Adrenal gland (tissue), 19 donors: ENCODE measurements at regions of chr6 and their contacts with region 1.

Region 1: GRCh38 chr6:7725849-7726415 is at the start of gene BMP6:
- DNase-seq: peak; percentile 88 to 92 (median 90)
- H3K4me3 ChIP-seq: peak within 1 kb of the TSS in 2 of 4 donors; percentile 34 to 80
- H3K27ac ChIP-seq: no peak within 1 kb of the TSS
- H3K4me1 ChIP-seq: peaks cover 17 to 33% of the 10 kb centered on the region in 2 donors
- H3K27me3 ChIP-seq: peaks cover 28% of the 10 kb centered on the region
- CTCF ChIP-seq: no peak
- POLR2A ChIP-seq: peak in 1 of 2 donors; percentile 52
- total RNA-seq, gene BMP6: 1.7 to 17.0 (median 4.7) TPM

Region 2: DNA sequence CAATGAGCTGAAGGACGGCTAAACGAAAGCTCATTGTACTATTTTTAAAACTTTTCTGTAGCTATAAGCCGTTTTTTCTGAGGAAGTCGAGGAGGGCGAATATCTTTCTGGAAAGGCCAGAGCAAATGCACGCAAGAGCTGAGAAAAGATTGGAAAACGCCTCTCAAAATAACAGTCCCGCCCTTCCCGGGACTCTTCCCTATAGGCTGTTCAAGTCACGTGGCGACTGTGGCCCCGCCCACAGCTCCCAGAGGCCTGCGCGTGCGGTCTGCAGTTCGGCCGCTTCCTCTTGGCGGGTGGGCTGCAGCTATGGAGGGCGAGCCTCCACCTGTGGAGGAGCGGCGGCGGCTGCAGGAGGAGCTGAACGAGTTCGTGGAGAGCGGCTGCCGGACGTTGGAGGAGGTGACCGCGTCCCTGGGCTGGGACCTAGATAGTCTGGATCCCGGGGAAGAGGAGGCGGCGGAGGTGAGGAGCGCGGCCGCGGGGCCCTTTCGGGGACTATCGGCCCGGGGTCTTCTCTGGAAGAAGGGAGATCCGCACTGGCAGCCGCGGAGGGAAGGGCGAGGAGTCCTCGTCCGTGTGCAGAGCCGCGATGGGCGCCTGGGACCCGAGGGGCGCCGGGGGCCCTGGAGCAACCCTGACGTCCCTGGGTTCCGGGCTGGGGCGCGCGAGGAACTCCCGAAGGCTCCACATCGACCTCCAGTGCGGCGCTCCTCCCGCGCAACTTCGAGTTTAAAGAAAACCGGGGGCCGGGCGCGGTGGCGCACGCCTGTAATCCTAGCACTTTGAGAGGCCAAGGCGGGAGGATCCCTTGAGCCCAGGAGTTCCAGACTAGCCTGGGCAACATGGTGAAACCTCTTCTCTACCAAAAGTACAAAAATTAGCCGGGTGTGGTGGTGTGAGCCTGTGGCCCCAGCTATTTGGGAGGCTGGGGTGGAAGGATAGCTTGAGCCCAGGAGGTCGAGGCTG is 135.7 kb before region 1 on chr6 and contains the start of gene SNRNP48:
- intact Hi-C with region 1: no loop called
- DNase-seq: peak; percentile 93 to 98 (median 96)
- H3K4me3 ChIP-seq: peak within 1 kb of the TSS; percentile 51 to 96 (median 88)
- H3K27ac ChIP-seq: peak within 1 kb of the TSS in 4 of 5 donors; percentile 52 to 72 (median 62)
- H3K4me1 ChIP-seq: peaks cover 13 to 26% of the 10 kb centered on the region in 2 donors
- H3K27me3 ChIP-seq: no peaks in the 10 kb centered on the region
- CTCF ChIP-seq: no peak
- POLR2A ChIP-seq: peak; percentile 48 to 69
- total RNA-seq, gene SNRNP48: 2.5 to 13.1 (median 10.1) TPM

Region 3: DNA sequence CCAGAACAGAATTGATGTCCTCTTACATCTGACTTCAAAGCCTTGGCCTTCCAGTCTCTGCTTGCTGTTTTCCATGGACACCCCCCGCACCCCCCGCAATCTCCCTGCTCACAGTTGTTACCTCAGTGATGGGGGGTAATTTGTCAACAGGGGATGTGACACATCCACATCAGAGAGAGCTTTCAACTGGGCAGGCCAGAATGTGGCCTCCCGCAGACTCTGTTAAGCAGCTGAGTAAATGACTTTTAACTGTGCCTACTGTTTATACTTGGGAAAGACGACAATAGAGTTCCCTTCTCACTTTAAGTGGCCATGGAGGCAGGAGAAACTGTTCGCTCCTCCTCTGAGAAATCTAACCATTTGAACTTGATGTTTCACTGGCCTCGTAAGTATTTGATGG is 133.7 kb after region 1 on chr6:
- intact Hi-C with region 1: loop called (anchors 10 kb)
- DNase-seq: no peak
- H3K4me3 ChIP-seq: no peak overlapping the region
- H3K27ac ChIP-seq: no peak overlapping the region
- H3K4me1 ChIP-seq: no peaks in the 10 kb centered on the region
- H3K27me3 ChIP-seq: no peaks in the 10 kb centered on the region
- CTCF ChIP-seq: no peak
- POLR2A ChIP-seq: no peak

Region 4: DNA sequence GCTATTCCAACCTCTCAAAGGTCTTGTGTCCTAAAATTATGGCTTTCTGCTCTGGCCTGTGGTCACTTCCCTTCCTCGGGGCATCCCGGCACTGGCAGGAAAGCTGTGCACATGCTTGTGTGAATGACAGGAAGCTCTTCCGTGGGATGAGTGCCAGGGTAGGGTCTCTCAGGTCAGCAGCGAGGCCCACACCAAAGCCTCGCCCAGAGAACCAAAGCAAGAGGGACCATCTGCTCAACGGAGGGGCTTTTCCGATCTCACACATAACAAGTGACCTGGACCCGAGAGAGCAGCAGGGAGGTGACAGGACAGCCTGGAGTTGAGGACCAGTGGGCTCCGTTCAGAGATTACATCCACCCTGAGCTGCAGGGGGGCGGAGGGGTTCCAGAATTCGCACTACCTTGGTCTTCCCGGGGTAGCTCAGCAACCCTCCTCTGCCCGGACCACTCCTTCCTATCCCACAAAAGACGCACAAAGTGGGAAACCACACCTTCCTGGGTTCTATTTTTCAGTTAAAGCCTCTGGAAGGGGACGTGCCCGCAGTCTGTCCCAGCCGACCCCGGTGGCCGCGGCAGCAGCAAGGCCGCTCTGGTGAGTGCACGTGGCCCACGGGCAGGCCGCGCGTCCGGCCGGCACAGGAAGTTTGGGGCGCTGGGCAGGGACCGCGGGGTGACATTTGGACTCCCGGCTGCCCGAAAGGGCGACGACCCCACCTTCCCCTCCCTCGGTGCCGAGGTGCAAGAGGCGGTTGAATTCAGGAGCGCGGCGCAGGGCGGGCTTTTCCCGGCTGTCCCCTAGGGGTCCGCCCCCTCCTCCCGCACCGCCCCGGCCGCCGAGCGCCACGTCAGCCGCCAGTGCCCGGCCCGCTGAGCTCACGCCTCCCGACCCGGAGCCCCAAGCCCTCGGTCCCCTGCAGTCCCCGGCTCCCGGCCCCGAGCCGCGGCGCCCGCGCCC is 183.7 kb after region 1 on chr6:
- intact Hi-C with region 1: loop called in 1 of 2 experiments (anchors 10 kb)
- DNase-seq: peak; percentile 49 to 74 (median 65)
- H3K4me3 ChIP-seq: peak overlapping the region; percentile 5 to 99 (median 49)
- H3K27ac ChIP-seq: peak overlapping the region in 3 of 5 donors; percentile 67 to 89 (median 78)
- H3K4me1 ChIP-seq: peaks cover 15 to 30% of the 10 kb centered on the region in 2 donors
- H3K27me3 ChIP-seq: no peaks in the 10 kb centered on the region
- CTCF ChIP-seq: no peak
- POLR2A ChIP-seq: no peak

Region 5: GRCh38 chr6:7986219-7986618 is 260.3 kb after region 1 on chr6:
- intact Hi-C with region 1: loop called in 1 of 2 experiments (anchors 5 kb)
- DNase-seq: no peak
- H3K4me3 ChIP-seq: no peak overlapping the region
- H3K27ac ChIP-seq: no peak overlapping the region
- H3K4me1 ChIP-seq: no peaks in the 10 kb centered on the region
- H3K27me3 ChIP-seq: no peaks in the 10 kb centered on the region
- CTCF ChIP-seq: no peak
- POLR2A ChIP-seq: no peak

Region 6: DNA sequence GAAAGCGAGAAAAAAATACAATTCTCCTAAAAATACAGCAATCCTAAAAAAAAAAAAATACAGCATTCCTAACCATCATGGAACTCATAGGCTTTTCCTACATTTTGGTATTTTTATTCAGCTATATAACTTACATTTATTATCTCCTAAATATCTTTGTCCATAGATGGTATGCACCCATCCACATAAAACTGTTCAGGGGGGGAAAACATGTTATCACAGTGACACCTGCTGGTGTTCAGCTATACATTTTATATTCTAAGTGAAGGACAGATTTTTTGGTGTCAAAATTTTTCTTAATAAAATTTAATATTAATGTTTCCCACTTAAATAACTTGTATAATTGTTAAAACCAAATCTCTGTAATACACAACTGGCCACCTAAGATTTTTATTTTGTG is 280.3 kb after region 1 on chr6:
- intact Hi-C with region 1: loop called in 1 of 2 experiments (anchors 10 kb)
- DNase-seq: peak in 1 of 7 donors; percentile 25
- H3K4me3 ChIP-seq: no peak overlapping the region
- H3K27ac ChIP-seq: no peak overlapping the region
- H3K4me1 ChIP-seq: no peaks in the 10 kb centered on the region
- H3K27me3 ChIP-seq: no peaks in the 10 kb centered on the region
- CTCF ChIP-seq: peak; percentile 24 to 59 (median 54)
- POLR2A ChIP-seq: no peak

Region 7: DNA sequence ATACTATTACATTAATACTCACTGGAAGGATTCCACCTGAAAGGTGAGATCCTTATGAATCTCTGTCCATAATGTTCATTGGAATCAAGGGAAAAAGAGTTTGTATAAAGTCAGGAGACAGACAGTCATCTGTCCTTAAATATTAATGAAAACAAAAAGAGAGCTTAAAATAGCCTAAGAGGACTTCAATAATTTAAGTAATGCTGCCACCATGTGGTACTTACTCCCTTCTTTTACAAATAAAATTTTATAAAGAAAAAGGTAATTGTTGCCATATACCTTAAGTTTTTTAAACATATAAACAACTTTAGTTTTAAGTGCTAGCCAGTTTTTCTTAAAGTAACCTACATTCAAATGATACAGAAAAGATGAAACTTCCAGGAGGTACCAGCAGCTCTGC is 333.2 kb after region 1 on chr6:
- intact Hi-C with region 1: loop called in 1 of 2 experiments (anchors 5 kb)
- DNase-seq: no peak
- H3K4me3 ChIP-seq: no peak overlapping the region
- H3K27ac ChIP-seq: no peak overlapping the region
- H3K4me1 ChIP-seq: peaks cover 0 to 12% of the 10 kb centered on the region in 2 donors
- H3K27me3 ChIP-seq: no peaks in the 10 kb centered on the region
- CTCF ChIP-seq: peak; percentile 15 to 46 (median 32)
- POLR2A ChIP-seq: no peak